ENCODE measurements at regions of chr4 and their contacts with region 1.

Region 1: GRCh38 chr4:185039508-185040273 is 21.4 kb downstream of the HELT start:
- DNase-seq: peak; percentile 67
- ATAC-seq: peak; percentile 95
- H3K4me3 Mint-ChIP-seq: peak overlapping the region; percentile 71
- H3K27ac Mint-ChIP-seq: peak overlapping the region; percentile 81
- H3K4me1 Mint-ChIP-seq: peaks cover 12% of the 10 kb centered on the region
- H3K27me3 Mint-ChIP-seq: peaks cover 4% of the 10 kb centered on the region
- CTCF ChIP-seq: peak; percentile 77

Region 2: DNA sequence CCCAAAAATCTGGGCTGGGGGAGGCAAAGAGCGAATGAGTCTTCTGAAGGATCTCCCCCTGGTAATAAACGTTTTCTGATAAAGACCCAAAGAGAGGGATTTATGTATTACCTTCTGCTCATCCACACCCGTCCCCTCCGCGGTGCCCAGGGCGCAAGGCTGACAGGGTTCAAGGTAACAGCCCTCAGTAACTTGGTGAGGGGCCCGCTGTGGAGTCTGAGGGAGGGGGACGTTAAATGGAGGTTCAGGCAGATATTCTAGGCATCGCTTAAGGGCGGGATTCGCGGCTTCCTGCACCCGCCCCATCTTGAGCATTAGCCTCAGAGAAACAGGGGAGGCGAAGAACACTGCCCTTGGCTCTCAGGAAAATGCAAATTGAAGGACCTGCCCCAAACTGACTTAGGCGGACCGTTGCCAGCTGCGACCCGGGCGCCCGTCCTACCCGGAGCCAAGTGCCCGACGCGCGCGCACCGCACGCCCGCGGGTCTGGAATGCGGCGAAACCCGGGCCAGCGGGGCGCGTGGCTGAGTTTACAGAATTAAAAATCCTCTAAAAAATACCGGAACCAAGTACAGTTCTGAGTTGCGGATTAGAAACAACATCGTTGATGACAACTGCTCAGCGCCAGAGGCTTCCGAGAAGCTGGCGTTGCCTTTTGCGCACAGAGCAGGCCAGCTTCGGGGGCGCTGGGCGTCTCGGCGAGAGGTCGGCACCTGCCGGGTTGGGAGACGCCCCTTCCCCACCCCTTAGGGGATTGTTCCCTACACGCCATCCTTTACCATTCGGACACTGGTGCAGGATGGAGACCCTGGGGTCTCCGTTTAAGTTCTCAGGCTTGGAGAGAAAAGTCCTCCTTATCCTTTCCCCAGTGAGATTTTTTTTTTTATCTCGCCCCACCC is 18.6 kb before region 1 on chr4:
- CTCF ChIA-PET with region 1: interaction called, 23 read pairs
- POLR2A ChIA-PET with region 1: no interaction called
- intact Hi-C with region 1: no loop called
- DNase-seq: no peak
- ATAC-seq: no peak
- H3K4me3 Mint-ChIP-seq: no peak overlapping the region
- H3K27ac Mint-ChIP-seq: no peak overlapping the region
- H3K4me1 Mint-ChIP-seq: peaks cover 7% of the 10 kb centered on the region
- H3K27me3 Mint-ChIP-seq: peaks cover 65% of the 10 kb centered on the region
- CTCF ChIP-seq: no peak

Region 3: GRCh38 chr4:185142912-185143595 is 103.4 kb after region 1 on chr4 and contains the start of gene SLC25A4:
- CTCF ChIA-PET with region 1: interaction called, 14 read pairs
- POLR2A ChIA-PET with region 1: interaction called, 3 read pairs
- intact Hi-C with region 1: no loop called
- DNase-seq: peak; percentile 91
- ATAC-seq: peak; percentile 97
- H3K4me3 Mint-ChIP-seq: peak within 1 kb of the TSS; percentile 78
- H3K27ac Mint-ChIP-seq: peak within 1 kb of the TSS; percentile 76
- H3K4me1 Mint-ChIP-seq: peaks cover 13% of the 10 kb centered on the region
- H3K27me3 Mint-ChIP-seq: peaks cover 3% of the 10 kb centered on the region
- CTCF ChIP-seq: peak; percentile 47
- total RNA-seq, gene SLC25A4: 8.5 to 8.7 TPM

Region 4: GRCh38 chr4:185165605-185166063 is 125.9 kb after region 1 on chr4:
- CTCF ChIA-PET with region 1: no interaction called
- POLR2A ChIA-PET with region 1: no interaction called
- intact Hi-C with region 1: no loop called
- DNase-seq: no peak
- ATAC-seq: peak; percentile 85
- H3K4me3 Mint-ChIP-seq: peak overlapping the region; percentile 30
- H3K27ac Mint-ChIP-seq: peak overlapping the region; percentile 58
- H3K4me1 Mint-ChIP-seq: peaks cover 20% of the 10 kb centered on the region
- H3K27me3 Mint-ChIP-seq: peaks cover 3% of the 10 kb centered on the region
- CTCF ChIP-seq: no peak

Measured in activated CD8-positive, alpha-beta T cell treated with anti-CD3 and anti-CD28 coated beads for 36 hours (primary cell).